ENCODE measurements at regions of chr13 and their contacts with region 1.

Region 1: DNA sequence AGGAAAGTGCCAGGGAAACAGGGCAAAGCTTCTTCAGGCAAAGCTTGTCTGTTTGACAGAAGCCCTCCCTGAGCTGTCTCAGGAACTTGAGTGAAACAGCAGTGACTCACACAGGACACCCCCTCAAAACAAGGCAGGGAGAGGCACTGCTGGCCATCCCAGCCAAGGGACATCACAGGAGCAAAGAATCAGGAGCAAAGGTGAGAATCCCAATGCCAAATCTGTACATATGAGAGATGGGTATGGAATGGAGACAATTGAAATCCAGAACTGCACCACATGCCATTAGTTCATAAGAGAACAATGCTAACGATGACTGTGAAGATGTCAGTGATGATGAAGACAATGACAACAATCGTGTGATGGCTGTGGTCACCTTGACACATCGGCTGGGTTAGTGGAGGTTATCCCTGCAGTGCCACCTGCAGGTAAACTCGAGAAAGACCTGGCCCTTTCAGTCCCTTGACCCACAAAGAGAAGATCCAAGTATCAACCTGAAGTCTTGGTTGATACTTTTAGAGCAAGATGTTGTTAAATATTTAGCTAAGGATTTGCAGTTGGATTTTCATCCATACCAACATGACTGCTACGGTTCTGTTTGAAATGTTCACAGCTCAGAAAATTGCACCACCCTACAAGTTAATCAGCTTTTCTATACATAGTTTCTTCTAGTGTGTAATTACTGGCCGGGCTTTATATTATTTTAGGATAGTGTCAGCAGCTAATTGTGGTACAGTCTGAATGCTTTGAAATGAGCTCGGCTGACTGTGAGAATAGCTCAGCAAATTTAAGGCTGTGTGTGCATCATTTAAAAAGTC is 42.0 kb upstream of the IPO5 start:
- DNase-seq: peak; percentile 29
- H3K4me3 ChIP-seq: no peak overlapping the region
- H3K27ac ChIP-seq: no peak overlapping the region
- H3K4me1 ChIP-seq: no peaks in the 10 kb centered on the region
- H3K27me3 ChIP-seq: no peaks in the 10 kb centered on the region
- CTCF ChIP-seq: peak; percentile 44 to 58

Region 2: DNA sequence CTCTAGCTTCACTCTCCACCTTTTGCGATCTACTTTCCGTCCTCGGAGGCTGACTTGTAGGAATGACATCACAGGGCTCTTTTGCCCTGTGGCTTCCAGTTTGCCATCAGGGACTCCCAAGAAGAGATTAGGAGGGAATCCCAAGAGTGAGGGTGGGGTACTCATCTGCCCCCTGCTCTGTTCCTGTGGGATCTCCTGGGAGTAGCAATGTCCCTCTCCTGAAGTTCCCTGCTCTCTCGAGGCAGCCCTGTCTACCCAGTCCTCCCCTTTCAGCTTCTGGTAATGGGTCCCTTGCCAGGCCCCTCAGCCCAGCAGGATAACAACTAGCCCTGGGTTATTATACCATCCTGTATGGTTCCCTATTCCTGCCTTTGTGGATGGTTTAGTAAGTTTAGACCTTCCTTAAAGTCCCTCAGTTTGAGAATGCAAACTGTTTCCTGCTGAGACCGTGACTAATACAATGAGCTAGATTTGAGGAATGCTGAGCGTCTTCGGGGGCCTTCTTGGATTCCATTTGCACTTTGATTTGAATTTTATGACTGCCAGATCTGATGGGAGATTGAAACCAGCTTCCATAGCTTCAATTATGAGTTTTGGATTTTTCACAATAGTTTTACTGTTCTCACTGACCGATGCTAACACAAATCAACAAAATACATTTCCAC is 31.7 kb before region 1 on chr13:
- CTCF ChIA-PET with region 1: no interaction called
- dilution Hi-C with region 1: no loop called
- in situ Hi-C with region 1: no loop called
- intact Hi-C with region 1: no loop called
- DNase-seq: peak; percentile 54
- H3K4me3 ChIP-seq: no peak overlapping the region
- H3K27ac ChIP-seq: no peak overlapping the region
- H3K4me1 ChIP-seq: peaks cover 11% of the 10 kb centered on the region
- H3K27me3 ChIP-seq: no peaks in the 10 kb centered on the region
- CTCF ChIP-seq: no peak

Region 3: GRCh38 chr13:98050041-98050466 is 138.5 kb after region 1 on chr13:
- CTCF ChIA-PET with region 1: no interaction called
- dilution Hi-C with region 1: no loop called
- in situ Hi-C with region 1: no loop called
- intact Hi-C with region 1: no loop called
- DNase-seq: peak; percentile 5
- H3K4me3 ChIP-seq: no peak overlapping the region
- H3K27ac ChIP-seq: no peak overlapping the region
- H3K4me1 ChIP-seq: no peaks in the 10 kb centered on the region
- H3K27me3 ChIP-seq: no peaks in the 10 kb centered on the region
- CTCF ChIP-seq: no peak

Region 4: DNA sequence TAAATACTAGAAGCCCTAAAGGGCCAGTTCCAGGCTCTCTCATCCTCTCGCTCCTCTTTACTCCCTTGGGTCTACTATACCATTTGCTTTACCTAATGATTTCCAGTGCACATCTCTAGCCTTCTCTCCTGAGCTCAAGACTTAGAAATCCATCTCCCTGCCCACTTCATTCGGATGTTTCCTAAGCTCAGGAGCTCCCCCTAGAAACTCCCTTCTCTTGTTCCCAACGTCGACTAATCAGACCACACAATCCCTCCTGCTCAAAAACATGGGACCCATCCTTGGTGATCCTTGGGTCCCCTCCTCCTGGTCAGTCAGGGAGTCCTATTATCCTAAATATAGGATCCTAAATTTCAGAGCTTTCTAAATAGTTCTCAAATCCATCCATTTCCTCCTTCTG is 686.5 kb after region 1 on chr13:
- CTCF ChIA-PET with region 1: interaction called, 15 read pairs
- dilution Hi-C with region 1: no loop called
- in situ Hi-C with region 1: no loop called
- intact Hi-C with region 1: no loop called
- DNase-seq: no peak
- H3K4me3 ChIP-seq: no peak overlapping the region
- H3K27ac ChIP-seq: no peak overlapping the region
- H3K4me1 ChIP-seq: no peaks in the 10 kb centered on the region
- H3K27me3 ChIP-seq: no peaks in the 10 kb centered on the region
- CTCF ChIP-seq: peak in 1 of 2 donors; percentile 13